Left ventricle myocardium inferior (tissue), 1 donor: ENCODE measurements at regions of chr17 and their contacts with region 1.

Region 1: GRCh38 chr17:72560303-72561247 is 439.8 kb downstream of the SOX9 start:
- DNase-seq: no peak
- H3K4me3 ChIP-seq: no peak overlapping the region
- H3K27ac ChIP-seq: no peak overlapping the region
- H3K4me1 ChIP-seq: no peaks in the 10 kb centered on the region
- H3K27me3 ChIP-seq: peaks cover 56% of the 10 kb centered on the region
- CTCF ChIP-seq: peak; percentile 86

Region 2: DNA sequence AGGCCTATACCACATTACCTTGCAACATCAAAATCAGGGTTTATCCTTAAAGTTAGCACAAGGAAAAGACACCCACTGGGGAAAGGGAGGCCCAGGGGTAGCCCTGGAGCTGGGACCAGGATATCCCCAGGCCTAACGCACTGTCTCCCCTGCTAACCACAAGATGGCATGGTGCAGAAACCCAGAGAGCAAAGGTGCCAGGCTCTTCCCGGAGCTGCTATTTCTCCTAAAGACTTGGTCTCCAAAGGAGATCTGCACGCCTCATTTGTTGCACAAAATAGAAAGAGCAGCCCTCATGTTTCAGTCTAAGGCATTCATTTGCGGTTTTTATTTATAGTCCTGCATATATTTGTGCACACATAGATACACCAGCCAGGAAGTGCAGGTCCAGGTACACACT is 31.2 kb before region 1 on chr17:
- intact Hi-C with region 1: no loop called
- DNase-seq: no peak
- H3K4me3 ChIP-seq: no peak overlapping the region
- H3K27ac ChIP-seq: no peak overlapping the region
- H3K4me1 ChIP-seq: no peaks in the 10 kb centered on the region
- H3K27me3 ChIP-seq: peaks cover 22% of the 10 kb centered on the region
- CTCF ChIP-seq: no peak

Region 3: DNA sequence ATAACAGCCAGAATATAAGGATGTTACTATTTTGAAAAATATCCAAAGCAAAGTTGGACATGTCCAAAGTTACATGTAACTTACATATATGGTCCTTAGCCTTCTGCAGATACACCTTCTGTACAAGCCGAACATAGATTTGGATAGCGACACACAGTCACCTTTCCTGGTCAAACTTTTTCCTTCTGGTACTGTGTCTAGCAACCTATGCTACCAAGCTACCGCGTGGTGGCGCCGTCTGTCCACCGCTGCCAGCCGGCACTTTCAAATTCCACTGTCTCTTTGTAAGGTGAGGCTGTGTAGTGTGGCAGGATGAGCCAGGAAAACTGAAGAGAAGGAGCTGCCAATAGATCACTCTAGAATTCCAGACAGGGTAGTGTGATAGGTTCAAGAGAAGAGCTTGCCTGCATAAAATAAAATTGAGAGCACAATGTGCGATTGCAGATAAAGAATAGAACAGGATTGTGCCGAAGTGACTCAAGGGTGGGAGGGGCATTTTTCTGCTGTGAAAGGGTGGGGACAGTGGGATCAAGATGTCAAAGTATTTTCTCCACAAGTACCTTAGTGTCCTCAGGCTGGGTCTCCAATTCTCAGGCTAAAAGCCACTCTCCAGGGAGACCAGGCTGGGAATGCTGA is 165.0 kb after region 1 on chr17:
- intact Hi-C with region 1: loop called (anchors 10 kb)
- DNase-seq: peak; percentile 47
- H3K4me3 ChIP-seq: no peak overlapping the region
- H3K27ac ChIP-seq: no peak overlapping the region
- H3K4me1 ChIP-seq: no peaks in the 10 kb centered on the region
- H3K27me3 ChIP-seq: no peaks in the 10 kb centered on the region
- CTCF ChIP-seq: peak; percentile 88